K562 (cell line): ENCODE measurements at regions of chr6 and their contacts with region 1.

Region 1: GRCh38 chr6:133512410-133513016 is 271.4 kb downstream of the EYA4 start:
- DNase-seq: peak; percentile 8 to 42 (median 14)
- ATAC-seq: peak; percentile 68; the same call in 2 of the 3 replicates
- H3K4me3 ChIP-seq: no peak overlapping the region
- H3K27ac ChIP-seq: no peak overlapping the region
- H3K4me1 ChIP-seq: no peaks in the 10 kb centered on the region
- H3K27me3 ChIP-seq: no peaks in the 10 kb centered on the region
- CTCF ChIP-seq: peak; percentile 50 to 64 (median 52)
- EP300 ChIP-seq: no peak
- POLR2A ChIP-seq: no peak
- RAD21 ChIP-seq: peak; percentile 66 to 73

Region 2: DNA sequence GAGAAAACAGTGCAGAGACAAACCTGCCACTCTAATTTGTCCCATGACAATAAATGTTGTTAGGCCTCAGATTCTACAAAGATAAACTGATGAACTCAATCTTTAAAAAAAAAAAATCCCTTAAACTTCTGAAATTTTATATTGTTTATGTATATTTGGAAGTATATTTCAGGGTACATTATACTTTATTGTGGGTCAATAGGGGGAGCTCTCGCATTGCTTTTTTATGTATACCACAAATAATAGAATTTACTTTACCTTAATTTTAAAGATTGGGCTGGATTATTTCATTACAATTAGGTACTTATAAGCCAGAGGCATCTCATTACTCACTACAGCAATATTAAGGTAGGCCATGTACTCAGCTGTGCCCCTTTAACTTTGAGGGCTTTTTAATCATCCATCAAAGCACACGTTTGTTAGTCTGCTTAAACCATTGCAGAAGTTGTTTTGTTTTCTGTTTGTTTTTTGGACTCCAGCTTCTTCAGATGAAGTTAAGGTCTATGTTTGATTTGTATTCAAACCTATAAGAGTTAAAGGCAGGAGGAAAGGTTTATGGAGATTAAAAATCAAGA is 327.6 kb before region 1 on chr6:
- CTCF ChIA-PET with region 1: no interaction called
- POLR2A ChIA-PET with region 1: no interaction called
- in situ Hi-C with region 1: no loop called
- intact Hi-C with region 1: loop called (anchors 10 kb)
- DNase-seq: peak in 1 of 4 experiments; percentile 16
- ATAC-seq: no peak
- H3K4me3 ChIP-seq: no peak overlapping the region
- H3K27ac ChIP-seq: no peak overlapping the region
- H3K4me1 ChIP-seq: no peaks in the 10 kb centered on the region
- H3K27me3 ChIP-seq: no peaks in the 10 kb centered on the region
- CTCF ChIP-seq: peak in 1 of 3 experiments; percentile 40; a peak in 2 of 6 replicates
- EP300 ChIP-seq: no peak
- POLR2A ChIP-seq: no peak
- RAD21 ChIP-seq: peak; percentile 17 to 48; a peak in 3 of 4 replicates

Region 3: GRCh38 chr6:133218852-133219251 is 293.7 kb before region 1 on chr6:
- CTCF ChIA-PET with region 1: no interaction called
- POLR2A ChIA-PET with region 1: no interaction called
- in situ Hi-C with region 1: no loop called
- intact Hi-C with region 1: no loop called
- DNase-seq: no peak
- ATAC-seq: no peak
- H3K4me3 ChIP-seq: no peak overlapping the region
- H3K27ac ChIP-seq: no peak overlapping the region
- H3K4me1 ChIP-seq: no peaks in the 10 kb centered on the region
- H3K27me3 ChIP-seq: no peaks in the 10 kb centered on the region
- CTCF ChIP-seq: no peak
- EP300 ChIP-seq: no peak
- POLR2A ChIP-seq: no peak
- RAD21 ChIP-seq: no peak

Region 4: DNA sequence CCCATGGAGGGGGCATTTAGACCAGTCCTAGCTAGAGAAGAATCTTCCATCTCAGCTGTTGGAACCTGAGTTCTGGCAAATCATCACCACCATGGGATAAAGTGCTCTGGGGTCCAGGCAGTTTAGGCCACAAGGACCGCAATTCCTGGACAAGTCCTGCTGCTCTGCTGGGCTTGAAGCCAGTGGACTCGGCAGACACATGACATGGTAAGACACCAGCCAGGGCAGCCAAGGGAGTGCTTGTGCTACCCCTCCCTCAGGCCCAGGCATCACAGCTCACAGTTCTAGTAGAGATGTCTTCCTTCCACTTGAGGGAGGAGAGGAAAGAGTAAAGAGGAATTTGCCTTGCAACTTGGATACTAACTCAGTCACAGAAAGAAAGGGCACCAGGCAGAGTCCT is 25.3 kb before region 1 on chr6:
- CTCF ChIA-PET with region 1: no interaction called
- POLR2A ChIA-PET with region 1: no interaction called
- in situ Hi-C with region 1: no loop called
- intact Hi-C with region 1: no loop called
- DNase-seq: no peak
- ATAC-seq: no peak
- H3K4me3 ChIP-seq: no peak overlapping the region
- H3K27ac ChIP-seq: no peak overlapping the region
- H3K4me1 ChIP-seq: no peaks in the 10 kb centered on the region
- H3K27me3 ChIP-seq: no peaks in the 10 kb centered on the region
- CTCF ChIP-seq: no peak
- EP300 ChIP-seq: no peak
- POLR2A ChIP-seq: no peak
- RAD21 ChIP-seq: no peak

Region 5: GRCh38 chr6:133768656-133769295 is 256.3 kb after region 1 on chr6:
- CTCF ChIA-PET with region 1: no interaction called
- POLR2A ChIA-PET with region 1: no interaction called
- in situ Hi-C with region 1: no loop called
- intact Hi-C with region 1: no loop called
- DNase-seq: peak in 1 of 4 experiments; percentile 32
- ATAC-seq: no peak
- H3K4me3 ChIP-seq: no peak overlapping the region
- H3K27ac ChIP-seq: no peak overlapping the region
- H3K4me1 ChIP-seq: no peaks in the 10 kb centered on the region
- H3K27me3 ChIP-seq: no peaks in the 10 kb centered on the region; a peak in 1 of 5 replicates
- CTCF ChIP-seq: no peak
- EP300 ChIP-seq: no peak
- POLR2A ChIP-seq: no peak
- RAD21 ChIP-seq: no peak

Region 6: DNA sequence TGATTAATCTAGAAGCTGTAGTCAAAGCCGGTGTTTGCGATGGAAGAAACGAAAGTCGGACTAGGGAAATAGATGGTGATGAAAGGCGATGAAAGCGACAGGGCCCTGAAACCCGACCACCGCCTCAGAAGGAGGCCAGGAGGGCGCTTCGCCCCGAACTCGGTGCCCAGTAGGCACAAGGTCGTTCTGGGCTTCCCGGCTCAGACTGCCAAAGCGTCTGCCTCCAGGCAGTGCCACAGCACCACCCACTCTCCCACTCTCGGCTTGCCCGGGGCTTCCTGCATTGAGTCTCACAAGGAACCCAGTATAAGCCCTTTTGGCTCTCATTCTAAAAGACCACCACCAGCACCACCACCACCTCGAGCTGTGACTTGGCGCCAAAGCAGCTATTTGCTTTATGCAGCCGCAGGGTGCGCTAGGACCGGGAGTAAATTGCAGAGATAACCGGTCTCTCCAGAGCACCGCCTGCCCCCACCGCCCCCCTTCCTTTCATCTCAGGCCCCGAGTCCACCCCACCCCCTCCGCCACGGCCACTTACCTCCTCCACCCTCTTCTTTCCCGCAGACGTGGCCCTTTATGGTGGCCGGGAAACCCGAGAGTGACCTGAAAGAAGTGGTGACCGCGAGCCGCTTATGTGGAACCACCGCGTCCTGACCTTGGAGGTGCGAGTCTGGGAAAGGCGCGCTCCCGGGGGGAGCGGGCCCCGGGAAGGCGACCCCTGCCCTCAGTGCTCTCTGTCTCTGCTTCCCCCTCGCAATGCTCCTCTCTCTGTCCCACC is 378.8 kb after region 1 on chr6:
- CTCF ChIA-PET with region 1: no interaction called
- POLR2A ChIA-PET with region 1: no interaction called
- in situ Hi-C with region 1: no loop called
- intact Hi-C with region 1: no loop called
- DNase-seq: peak in 2 of 4 experiments; percentile 12 to 22
- ATAC-seq: peak; percentile 76
- H3K4me3 ChIP-seq: no peak overlapping the region
- H3K27ac ChIP-seq: no peak overlapping the region
- H3K4me1 ChIP-seq: peaks cover 0 to 20% of the 10 kb centered on the region in 2 experiments; a peak in 2 of 5 replicates
- H3K27me3 ChIP-seq: peaks cover 52 to 75% of the 10 kb centered on the region in 2 experiments
- CTCF ChIP-seq: no peak
- EP300 ChIP-seq: no peak
- POLR2A ChIP-seq: no peak
- RAD21 ChIP-seq: no peak